ENCODE measurements at regions of chr14 and their contacts with region 1.

Region 1: DNA sequence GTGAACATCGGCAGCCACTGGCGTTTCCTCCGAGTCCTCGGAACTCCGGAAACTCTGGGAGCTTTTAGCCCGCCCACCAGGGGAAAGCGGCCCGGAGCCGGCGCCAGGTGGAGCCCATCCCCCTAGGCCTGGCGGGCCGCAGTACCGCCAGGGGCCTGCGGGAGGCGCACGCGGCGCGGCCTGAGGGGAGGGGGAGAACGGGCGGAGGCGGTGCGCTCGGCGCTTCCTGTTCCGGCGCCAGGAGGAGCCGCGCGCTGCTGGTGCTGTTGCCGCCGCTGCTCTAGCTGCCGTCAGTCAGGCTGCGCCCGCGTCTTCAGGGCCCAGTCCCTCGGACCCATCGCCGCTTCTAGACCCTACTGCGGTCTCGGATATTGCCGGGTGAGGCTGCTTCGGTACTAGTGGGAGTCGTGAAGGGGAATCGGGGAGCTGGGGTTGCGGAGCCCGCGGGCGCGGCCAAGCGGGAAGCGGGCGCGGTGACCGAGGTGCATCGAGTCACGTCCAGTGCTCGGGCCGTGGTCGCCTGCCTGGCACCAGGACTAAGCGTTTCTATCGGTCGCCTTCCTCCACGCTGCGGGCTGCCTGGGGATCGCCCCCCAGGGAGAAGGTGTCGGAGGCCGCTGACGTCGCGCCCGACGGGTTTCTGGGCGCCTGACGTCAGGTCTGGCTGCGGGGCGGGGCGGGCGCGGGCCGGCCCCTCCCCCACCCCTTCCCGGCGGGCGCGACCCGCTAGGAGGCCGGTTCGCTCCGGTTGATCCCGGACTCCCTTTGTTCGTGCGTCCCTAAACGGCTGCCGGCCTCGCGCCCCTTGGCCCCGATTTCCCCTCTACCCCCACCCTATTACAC is at the start of gene MAPK1IP1L:
- DNase-seq: peak; percentile 84 to 92 (median 90)
- H3K4me3 ChIP-seq: peak within 1 kb of the TSS; percentile 94
- H3K4me3 Mint-ChIP-seq: peak within 1 kb of the TSS; percentile 83 to 95 (median 92)
- H3K27ac ChIP-seq: peak within 1 kb of the TSS; percentile 100
- H3K27ac Mint-ChIP-seq: peak within 1 kb of the TSS; percentile 93 to 100 (median 99)
- H3K4me1 ChIP-seq: peaks cover 33% of the 10 kb centered on the region
- H3K4me1 Mint-ChIP-seq: peaks cover 44 to 54% (median 51%) of the 10 kb centered on the region in 3 donors
- H3K27me3 ChIP-seq: no peaks in the 10 kb centered on the region
- H3K27me3 Mint-ChIP-seq: peaks cover 0 to 1% of the 10 kb centered on the region in 2 donors
- total RNA-seq, gene MAPK1IP1L: 104 to 106 TPM

Region 2: DNA sequence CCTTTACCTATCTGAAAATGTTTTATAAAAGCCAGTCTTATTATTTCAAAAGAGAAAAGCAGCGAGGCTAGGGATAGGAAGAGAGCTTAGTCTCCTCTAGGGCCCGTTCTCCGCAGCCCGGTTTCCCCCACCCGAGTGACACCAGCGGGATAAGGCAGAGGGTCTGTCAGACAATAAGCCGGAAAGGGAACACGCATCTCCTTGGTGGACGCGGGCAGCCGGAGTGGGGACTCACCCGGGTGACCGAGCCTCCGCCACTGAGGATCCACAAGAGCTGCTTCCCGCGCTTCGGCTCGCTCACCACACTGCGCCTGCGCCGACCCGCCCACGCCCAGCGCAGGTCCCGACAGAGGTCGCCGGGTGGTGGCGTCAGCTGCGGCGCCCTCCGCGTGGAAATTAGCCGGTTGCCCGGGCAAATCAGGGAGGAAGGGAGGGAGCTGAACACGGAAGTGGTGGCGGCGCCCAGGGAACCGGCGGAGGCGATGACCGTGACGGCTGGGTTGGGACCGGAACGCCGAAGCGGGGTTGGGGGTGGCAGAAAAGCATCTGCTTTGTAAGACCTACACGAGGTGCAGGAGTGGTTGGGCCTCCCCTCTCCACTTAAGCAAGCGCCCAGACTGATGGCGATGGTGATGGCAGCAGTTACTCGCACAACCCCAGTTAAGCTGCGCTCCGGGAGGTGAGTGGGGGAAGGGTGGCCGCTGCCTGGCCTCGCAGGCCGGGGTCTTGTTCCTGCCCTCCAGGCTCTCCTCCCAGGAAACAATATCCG is 24.7 kb before region 1 on chr14 and contains the starts of genes SOCS4 and WDHD1:
- CTCF ChIA-PET with region 1: interaction called, 28 read pairs
- POLR2A ChIA-PET with region 1: interaction called, 9 read pairs
- DNase-seq: peak; percentile 96 to 97 (median 96)
- H3K4me3 ChIP-seq: peak within 1 kb of the TSS; percentile 72
- H3K4me3 Mint-ChIP-seq: peak within 1 kb of the TSS; percentile 92 to 100 (median 94)
- H3K27ac ChIP-seq: peak within 1 kb of the TSS; percentile 83
- H3K27ac Mint-ChIP-seq: peak within 1 kb of the TSS; percentile 89 to 99 (median 95)
- H3K4me1 ChIP-seq: peaks cover 19% of the 10 kb centered on the region
- H3K4me1 Mint-ChIP-seq: peaks cover 50 to 63% (median 59%) of the 10 kb centered on the region in 3 donors
- H3K27me3 ChIP-seq: no peaks in the 10 kb centered on the region
- H3K27me3 Mint-ChIP-seq: no peaks in the 10 kb centered on the region
- total RNA-seq, gene SOCS4: 38.0 to 44.8 TPM
- total RNA-seq, gene WDHD1: 56.3 to 56.6 TPM

Region 3: GRCh38 chr14:55065411-55065810 is 13.8 kb after region 1 on chr14:
- CTCF ChIA-PET with region 1: interaction called, 14 read pairs
- POLR2A ChIA-PET with region 1: interaction called, 4 read pairs
- DNase-seq: no peak
- H3K4me3 ChIP-seq: no peak overlapping the region
- H3K4me3 Mint-ChIP-seq: no peak overlapping the region
- H3K27ac ChIP-seq: no peak overlapping the region
- H3K27ac Mint-ChIP-seq: peak overlapping the region in 5 of 8 donors; percentile 14 to 92 (median 48)
- H3K4me1 ChIP-seq: peaks cover 3% of the 10 kb centered on the region
- H3K4me1 Mint-ChIP-seq: peaks cover 21 to 35% (median 35%) of the 10 kb centered on the region in 3 donors
- H3K27me3 ChIP-seq: no peaks in the 10 kb centered on the region
- H3K27me3 Mint-ChIP-seq: no peaks in the 10 kb centered on the region

Region 4: DNA sequence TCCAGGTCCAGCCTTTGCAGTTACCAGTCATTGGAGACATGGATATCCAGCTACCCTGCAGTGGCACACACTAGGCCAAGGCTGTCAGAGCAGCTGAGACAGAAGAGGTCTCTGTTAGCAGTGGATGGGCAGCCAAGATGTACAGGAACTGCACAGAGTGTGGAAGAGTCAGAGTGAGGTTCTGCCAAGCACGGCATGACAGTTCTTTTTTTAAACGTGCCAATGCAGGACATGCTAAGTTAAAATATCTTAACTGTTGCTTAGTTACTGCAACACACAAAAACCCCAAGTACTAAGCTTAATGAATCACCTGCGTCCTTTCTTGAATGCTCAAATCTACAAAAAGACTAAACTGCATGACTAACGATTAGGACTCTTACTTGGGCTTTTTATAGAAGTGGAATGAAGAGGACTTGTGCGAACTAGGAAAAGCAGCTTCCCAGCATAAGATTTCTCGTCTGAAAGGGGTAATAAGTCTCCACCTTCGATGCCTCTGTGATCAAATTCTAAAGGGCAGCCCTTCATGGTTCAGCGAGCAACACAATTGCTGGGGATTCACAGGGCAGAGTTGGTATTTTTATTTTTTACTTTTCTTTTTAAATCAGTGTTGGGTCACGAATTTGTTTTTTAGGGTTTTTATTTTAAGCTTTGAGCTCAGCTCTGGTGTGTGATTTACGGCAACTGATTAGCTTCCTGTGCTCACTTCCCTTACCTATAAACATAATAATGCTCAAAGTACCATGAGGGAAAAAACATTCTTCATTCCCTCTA is 20.4 kb after region 1 on chr14:
- CTCF ChIA-PET with region 1: interaction called, 14 read pairs
- POLR2A ChIA-PET with region 1: no interaction called
- DNase-seq: peak in 2 of 5 donors; percentile 5 to 38
- H3K4me3 ChIP-seq: no peak overlapping the region
- H3K4me3 Mint-ChIP-seq: peak overlapping the region in 6 of 7 donors; percentile 20 to 75 (median 49)
- H3K27ac ChIP-seq: no peak overlapping the region
- H3K27ac Mint-ChIP-seq: peak overlapping the region; percentile 75 to 95 (median 86)
- H3K4me1 ChIP-seq: peaks cover 13% of the 10 kb centered on the region
- H3K4me1 Mint-ChIP-seq: peaks cover 28 to 50% (median 44%) of the 10 kb centered on the region in 3 donors
- H3K27me3 ChIP-seq: no peaks in the 10 kb centered on the region
- H3K27me3 Mint-ChIP-seq: peaks cover 0 to 3% of the 10 kb centered on the region in 2 donors

Region 5: DNA sequence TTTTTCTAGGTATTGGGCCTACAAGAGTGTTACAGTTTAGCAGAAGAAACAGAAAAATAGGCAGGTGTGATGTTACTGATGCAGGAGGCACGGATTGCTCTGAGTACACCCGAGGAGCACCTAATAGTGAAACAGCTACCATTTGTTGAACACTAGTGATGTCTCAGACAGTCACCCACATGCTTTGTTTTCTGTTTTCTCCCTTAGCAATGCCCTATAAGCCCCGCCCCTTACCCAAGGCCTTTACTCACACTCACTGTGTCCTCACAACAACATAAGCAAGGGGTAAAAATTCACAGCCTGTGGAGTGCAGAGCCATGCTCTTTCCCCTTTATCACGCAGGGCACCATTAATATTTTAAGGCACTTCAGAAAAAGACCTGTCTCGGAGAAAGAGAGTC is 25.5 kb after region 1 on chr14:
- CTCF ChIA-PET with region 1: interaction called, 14 read pairs
- POLR2A ChIA-PET with region 1: no interaction called
- DNase-seq: no peak
- H3K4me3 ChIP-seq: no peak overlapping the region
- H3K4me3 Mint-ChIP-seq: no peak overlapping the region
- H3K27ac ChIP-seq: no peak overlapping the region
- H3K27ac Mint-ChIP-seq: peak overlapping the region in 1 of 8 donors; percentile 66
- H3K4me1 ChIP-seq: peaks cover 7% of the 10 kb centered on the region
- H3K4me1 Mint-ChIP-seq: peaks cover 18 to 41% (median 27%) of the 10 kb centered on the region in 3 donors
- H3K27me3 ChIP-seq: no peaks in the 10 kb centered on the region
- H3K27me3 Mint-ChIP-seq: peaks cover 0 to 5% of the 10 kb centered on the region in 2 donors

Region 6: DNA sequence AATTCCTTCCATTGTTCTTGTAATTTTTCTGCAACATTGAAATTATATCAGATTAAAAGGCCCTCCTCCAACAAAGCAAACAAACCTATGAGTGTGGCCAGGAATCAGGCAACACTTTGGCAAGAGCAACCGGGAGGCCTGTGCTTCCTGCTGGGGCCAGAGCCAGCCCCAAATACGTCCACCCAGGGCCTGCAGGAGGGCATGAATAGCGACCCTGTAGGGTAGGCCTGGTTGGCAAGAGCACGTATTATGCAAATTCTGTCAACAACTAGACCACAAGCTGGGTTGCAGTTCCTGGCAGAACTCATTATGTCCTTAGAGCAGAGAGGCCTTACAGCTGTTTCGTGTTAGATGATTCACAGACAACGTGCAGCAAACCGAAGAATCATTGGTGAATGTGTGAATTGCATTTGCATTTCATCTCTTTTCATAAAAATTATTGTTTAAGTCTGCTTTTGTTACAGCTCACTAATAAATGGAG is 50.5 kb after region 1 on chr14:
- CTCF ChIA-PET with region 1: interaction called, 12 read pairs
- POLR2A ChIA-PET with region 1: interaction called, 18 read pairs
- DNase-seq: peak; percentile 19 to 78 (median 36)
- H3K4me3 ChIP-seq: no peak overlapping the region
- H3K4me3 Mint-ChIP-seq: peak overlapping the region; percentile 41 to 89 (median 72)
- H3K27ac ChIP-seq: peak overlapping the region; percentile 68
- H3K27ac Mint-ChIP-seq: peak overlapping the region; percentile 92 to 99 (median 98)
- H3K4me1 ChIP-seq: peaks cover 44% of the 10 kb centered on the region
- H3K4me1 Mint-ChIP-seq: peaks cover 58 to 72% (median 59%) of the 10 kb centered on the region in 3 donors
- H3K27me3 ChIP-seq: no peaks in the 10 kb centered on the region
- H3K27me3 Mint-ChIP-seq: no peaks in the 10 kb centered on the region

Measured in CD8-positive, alpha-beta memory T cell (primary cell).